Mammary epithelial cell (primary cell): ENCODE measurements at regions of chr19 and their contacts with region 1.

Region 1: GRCh38 chr19:5790573-5791520 is at the start of gene DUS3L:
- DNase-seq: peak; percentile 99
- H3K4me3 ChIP-seq: peak within 1 kb of the TSS; percentile 52 to 76 (median 70)
- H3K27ac ChIP-seq: peak within 1 kb of the TSS; percentile 91
- H3K4me1 ChIP-seq: peaks cover 11% of the 10 kb centered on the region
- H3K27me3 ChIP-seq: no peaks in the 10 kb centered on the region
- CTCF ChIP-seq: no peak
- total RNA-seq, gene DUS3L: 25.5 to 47.0 TPM

Region 2: GRCh38 chr19:5622463-5623396 is 168.1 kb before region 1 on chr19 and contains the starts of genes SAFB and SAFB2:
- CTCF ChIA-PET with region 1: no interaction called
- dilution Hi-C with region 1: no loop called
- in situ Hi-C with region 1: no loop called
- intact Hi-C with region 1: loop called (anchors 5 kb)
- DNase-seq: peak; percentile 99
- H3K4me3 ChIP-seq: peak within 1 kb of the TSS; percentile 83 to 97 (median 84)
- H3K27ac ChIP-seq: peak within 1 kb of the TSS; percentile 77
- H3K4me1 ChIP-seq: peaks cover 28% of the 10 kb centered on the region
- H3K27me3 ChIP-seq: no peaks in the 10 kb centered on the region
- CTCF ChIP-seq: no peak
- total RNA-seq, gene SAFB: 26.0 to 88.5 TPM
- total RNA-seq, gene SAFB2: 20.2 to 49.1 TPM

Region 3: GRCh38 chr19:5680083-5680436 is 110.8 kb before region 1 on chr19:
- CTCF ChIA-PET with region 1: no interaction called
- dilution Hi-C with region 1: no loop called
- in situ Hi-C with region 1: no loop called
- intact Hi-C with region 1: no loop called
- DNase-seq: no peak
- H3K4me3 ChIP-seq: peak overlapping the region; percentile 78 to 88 (median 83)
- H3K27ac ChIP-seq: peak overlapping the region; percentile 55
- H3K4me1 ChIP-seq: peaks cover 5% of the 10 kb centered on the region
- H3K27me3 ChIP-seq: no peaks in the 10 kb centered on the region
- CTCF ChIP-seq: no peak

Region 4: GRCh38 chr19:5690125-5690954 is 100.5 kb before region 1 on chr19 and contains the start of gene RPL36:
- CTCF ChIA-PET with region 1: no interaction called
- dilution Hi-C with region 1: no loop called
- in situ Hi-C with region 1: no loop called
- intact Hi-C with region 1: loop called (anchors 1 kb)
- DNase-seq: peak; percentile 95
- H3K4me3 ChIP-seq: peak within 1 kb of the TSS; percentile 65 to 97 (median 81)
- H3K27ac ChIP-seq: peak within 1 kb of the TSS; percentile 77
- H3K4me1 ChIP-seq: peaks cover 26% of the 10 kb centered on the region
- H3K27me3 ChIP-seq: no peaks in the 10 kb centered on the region
- CTCF ChIP-seq: peak; percentile 95 to 97
- total RNA-seq, gene RPL36: 323 to 990 TPM

Region 5: DNA sequence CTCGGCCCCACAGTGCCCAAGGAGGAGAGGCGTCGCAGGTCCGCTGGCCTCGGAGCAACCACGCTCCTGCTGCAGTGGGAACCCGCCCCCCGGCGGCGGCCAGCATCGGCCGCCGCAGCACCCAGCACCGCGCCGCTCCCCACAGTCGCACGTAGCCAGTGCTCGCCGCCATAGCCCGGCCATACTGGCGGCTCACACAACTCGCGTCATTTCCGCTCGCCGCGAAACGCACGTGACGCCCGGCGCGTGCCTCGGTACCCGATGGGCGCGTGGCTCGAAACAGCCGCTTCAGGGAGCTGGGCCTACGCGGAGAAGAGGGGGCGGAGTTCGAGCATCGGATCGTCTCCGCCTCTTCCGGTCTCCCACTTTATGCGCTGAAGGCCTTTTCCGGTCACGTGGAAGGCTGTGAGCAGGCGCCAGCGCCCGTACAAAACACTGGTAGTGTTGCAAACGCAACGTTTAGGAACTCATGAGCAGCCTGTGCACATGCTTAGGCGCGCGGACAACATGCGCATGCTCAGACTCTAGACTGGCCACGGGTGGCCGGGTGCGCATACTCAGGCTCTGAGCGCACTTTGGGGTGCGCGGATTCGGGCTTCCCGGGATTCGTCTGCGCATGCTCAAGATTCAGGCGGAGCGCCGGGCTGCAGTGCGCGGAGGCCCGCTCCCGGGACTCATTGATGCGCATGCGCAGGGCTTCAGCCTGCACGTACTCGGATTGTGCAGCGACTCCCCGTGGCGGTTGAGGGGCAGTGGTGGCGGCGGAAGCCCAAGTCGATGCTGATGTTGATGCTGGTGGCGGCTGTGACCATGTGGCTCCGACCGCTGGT is 70.7 kb before region 1 on chr19 and contains the starts of genes CATSPERD and LONP1:
- CTCF ChIA-PET with region 1: interaction called, 3 read pairs
- dilution Hi-C with region 1: no loop called
- in situ Hi-C with region 1: no loop called
- intact Hi-C with region 1: loop called (anchors 1 kb)
- DNase-seq: peak; percentile 98
- H3K4me3 ChIP-seq: peak within 1 kb of the TSS; percentile 46 to 94 (median 66)
- H3K27ac ChIP-seq: peak within 1 kb of the TSS; percentile 91
- H3K4me1 ChIP-seq: peaks cover 14% of the 10 kb centered on the region
- H3K27me3 ChIP-seq: no peaks in the 10 kb centered on the region
- CTCF ChIP-seq: peak; percentile 81 to 93
- total RNA-seq, gene CATSPERD: not detected
- total RNA-seq, gene LONP1: 73.7 to 88.3 TPM

Region 6: DNA sequence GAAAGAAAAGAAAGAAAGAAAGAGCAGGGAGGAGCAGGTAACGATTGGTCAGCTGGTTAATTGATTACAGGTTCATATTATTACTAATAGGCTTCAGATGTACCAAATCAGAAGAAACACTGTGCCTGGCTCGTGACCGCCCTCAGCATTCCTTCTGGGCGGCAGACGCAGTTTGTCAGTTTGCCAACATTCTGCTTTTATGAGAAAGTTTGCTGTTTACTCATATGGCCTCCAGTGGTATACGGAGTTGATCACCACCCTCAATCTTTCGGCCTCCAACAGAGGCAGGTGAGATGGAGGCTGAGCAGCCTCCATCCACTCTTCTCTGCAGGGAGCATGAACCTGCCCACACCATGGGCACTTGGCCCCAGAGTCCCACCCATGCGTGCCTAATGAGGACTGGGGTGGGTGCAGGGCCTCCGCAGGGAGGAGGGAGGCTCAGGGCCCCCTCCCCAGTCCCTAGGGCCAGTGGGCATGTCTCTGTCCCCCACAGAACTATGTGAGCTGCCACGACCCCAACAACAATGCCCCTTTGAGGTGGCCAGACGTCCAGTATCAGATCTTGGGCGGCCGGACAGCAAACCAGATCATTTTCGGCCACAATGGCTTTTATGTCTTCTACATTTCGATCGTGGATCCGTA is 15.1 kb before region 1 on chr19:
- CTCF ChIA-PET with region 1: no interaction called
- dilution Hi-C with region 1: no loop called
- in situ Hi-C with region 1: no loop called
- intact Hi-C with region 1: loop called (anchors 1 kb)
- DNase-seq: peak; percentile 30
- H3K4me3 ChIP-seq: no peak overlapping the region
- H3K27ac ChIP-seq: no peak overlapping the region
- H3K4me1 ChIP-seq: no peaks in the 10 kb centered on the region
- H3K27me3 ChIP-seq: no peaks in the 10 kb centered on the region
- CTCF ChIP-seq: no peak

Region 7: GRCh38 chr19:5850743-5851293 is 60.0 kb after region 1 on chr19:
- CTCF ChIA-PET with region 1: no interaction called
- dilution Hi-C with region 1: no loop called
- in situ Hi-C with region 1: no loop called
- intact Hi-C with region 1: no loop called
- DNase-seq: peak; percentile 51
- H3K4me3 ChIP-seq: no peak overlapping the region
- H3K27ac ChIP-seq: no peak overlapping the region
- H3K4me1 ChIP-seq: no peaks in the 10 kb centered on the region
- H3K27me3 ChIP-seq: no peaks in the 10 kb centered on the region
- CTCF ChIP-seq: no peak

Region 8: GRCh38 chr19:5880604-5881078 is 89.8 kb after region 1 on chr19:
- CTCF ChIA-PET with region 1: no interaction called
- dilution Hi-C with region 1: no loop called
- in situ Hi-C with region 1: no loop called
- intact Hi-C with region 1: no loop called
- DNase-seq: peak; percentile 19
- H3K4me3 ChIP-seq: no peak overlapping the region
- H3K27ac ChIP-seq: no peak overlapping the region
- H3K4me1 ChIP-seq: peaks cover under 1% of the 10 kb centered on the region
- H3K27me3 ChIP-seq: no peaks in the 10 kb centered on the region
- CTCF ChIP-seq: no peak

Region 9: DNA sequence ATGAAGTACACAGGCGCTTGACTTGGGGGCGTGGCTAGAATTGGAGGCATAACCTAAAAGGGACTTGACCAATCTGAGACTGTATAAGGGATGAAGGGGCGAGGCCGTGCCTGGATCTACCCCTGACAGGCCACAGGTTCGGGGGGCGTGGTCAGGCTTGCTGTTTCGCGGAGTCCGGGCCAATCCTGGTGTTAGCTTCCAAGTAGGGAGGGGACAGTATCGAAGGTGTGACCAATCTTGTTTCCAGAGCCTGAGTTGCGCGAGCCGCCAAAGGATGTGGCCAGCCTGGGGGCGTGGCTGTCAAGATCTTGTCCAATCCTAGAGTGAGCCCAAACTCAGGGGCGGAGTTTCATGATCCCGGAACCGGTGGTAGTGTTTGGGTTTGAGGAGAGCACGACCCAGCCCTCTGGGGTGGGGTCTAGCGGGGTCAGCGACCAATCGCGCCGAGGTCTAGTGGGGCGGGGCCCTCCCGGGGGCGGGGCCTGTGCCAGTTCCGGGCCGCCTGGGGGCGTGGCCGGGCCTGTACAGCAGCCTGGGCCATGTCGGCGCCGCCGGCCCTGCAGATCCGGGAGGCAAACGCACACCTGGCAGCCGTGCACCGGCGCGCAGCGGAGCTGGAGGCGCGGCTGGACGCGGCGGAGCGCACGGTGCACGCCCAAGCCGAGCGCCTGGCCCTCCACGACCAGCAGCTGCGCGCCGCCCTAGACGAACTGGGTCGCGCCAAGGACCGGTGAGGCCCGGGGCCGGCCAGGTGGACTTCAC is 113.7 kb after region 1 on chr19 and contains the start of gene VMAC:
- CTCF ChIA-PET with region 1: no interaction called
- dilution Hi-C with region 1: no loop called
- in situ Hi-C with region 1: no loop called
- intact Hi-C with region 1: loop called (anchors 1 kb)
- DNase-seq: peak; percentile 100
- H3K4me3 ChIP-seq: peak within 1 kb of the TSS; percentile 70 to 82 (median 78)
- H3K27ac ChIP-seq: peak within 1 kb of the TSS; percentile 90
- H3K4me1 ChIP-seq: peaks cover 4% of the 10 kb centered on the region
- H3K27me3 ChIP-seq: no peaks in the 10 kb centered on the region
- CTCF ChIP-seq: no peak
- total RNA-seq, gene VMAC: 3.4 to 7.3 TPM

Region 10: DNA sequence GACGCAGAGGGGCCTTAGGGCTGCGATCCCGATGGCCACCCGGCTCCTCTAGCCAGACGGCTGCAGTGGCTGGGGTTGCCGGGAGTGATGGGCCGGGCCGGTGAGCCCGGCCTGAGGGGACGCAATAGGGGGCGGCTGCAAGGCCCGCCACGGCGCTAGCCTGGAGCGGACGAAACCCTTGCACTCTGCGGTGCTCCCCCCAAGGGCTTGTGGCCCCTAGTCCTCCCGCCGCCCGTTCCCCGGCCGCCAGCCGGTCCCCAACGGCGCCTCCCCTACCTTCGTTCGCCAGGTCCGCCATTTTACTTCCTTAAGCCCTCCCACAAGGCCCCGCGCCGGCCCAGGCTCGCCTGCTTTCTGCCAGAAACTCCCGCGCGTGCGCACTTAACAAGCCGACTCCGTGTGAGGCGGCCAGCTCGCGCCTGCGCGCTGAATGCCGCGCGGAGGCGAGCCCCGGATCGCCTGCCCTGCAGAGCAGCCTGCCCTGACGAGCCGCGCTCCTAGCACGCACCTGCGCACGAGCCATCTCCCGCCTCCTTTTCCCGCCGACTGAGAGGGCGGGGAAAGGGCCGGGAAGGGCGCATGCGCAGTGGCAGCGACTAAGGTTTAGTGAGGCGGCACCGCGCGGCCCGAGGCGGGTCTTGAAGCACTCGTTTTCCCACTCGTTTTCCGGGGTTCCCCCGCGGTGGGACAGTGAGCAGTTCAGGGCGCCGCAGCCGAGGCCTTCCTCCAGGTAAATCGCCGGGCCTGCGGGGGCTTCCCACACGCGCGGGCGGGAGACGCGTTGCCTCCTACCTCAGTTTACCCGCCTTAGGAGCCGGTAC is 187.1 kb after region 1 on chr19 and contains the start of gene RANBP3:
- CTCF ChIA-PET with region 1: no interaction called
- dilution Hi-C with region 1: no loop called
- in situ Hi-C with region 1: no loop called
- intact Hi-C with region 1: loop called (anchors 5 kb)
- DNase-seq: peak; percentile 99
- H3K4me3 ChIP-seq: peak within 1 kb of the TSS; percentile 67 to 96 (median 81)
- H3K27ac ChIP-seq: peak within 1 kb of the TSS; percentile 58
- H3K4me1 ChIP-seq: peaks cover 21% of the 10 kb centered on the region
- H3K27me3 ChIP-seq: no peaks in the 10 kb centered on the region
- CTCF ChIP-seq: no peak
- total RNA-seq, gene RANBP3: 41.0 to 73.9 TPM